Endothelial cell of umbilical vein (primary cell): ENCODE measurements at regions of chr10 and their contacts with region 1.

Region 1: GRCh38 chr10:13891128-13892000 is 304.6 kb downstream of the PRPF18 start:
- DNase-seq: peak; percentile 56
- H3K4me3 ChIP-seq: peak overlapping the region; percentile 74 to 88 (median 78)
- H3K27ac ChIP-seq: peak overlapping the region; percentile 93
- H3K4me1 ChIP-seq: peaks cover 60% of the 10 kb centered on the region
- H3K27me3 ChIP-seq: no peaks in the 10 kb centered on the region
- CTCF ChIP-seq: no peak
- POLR2A ChIP-seq: peak; percentile 24

Region 2: DNA sequence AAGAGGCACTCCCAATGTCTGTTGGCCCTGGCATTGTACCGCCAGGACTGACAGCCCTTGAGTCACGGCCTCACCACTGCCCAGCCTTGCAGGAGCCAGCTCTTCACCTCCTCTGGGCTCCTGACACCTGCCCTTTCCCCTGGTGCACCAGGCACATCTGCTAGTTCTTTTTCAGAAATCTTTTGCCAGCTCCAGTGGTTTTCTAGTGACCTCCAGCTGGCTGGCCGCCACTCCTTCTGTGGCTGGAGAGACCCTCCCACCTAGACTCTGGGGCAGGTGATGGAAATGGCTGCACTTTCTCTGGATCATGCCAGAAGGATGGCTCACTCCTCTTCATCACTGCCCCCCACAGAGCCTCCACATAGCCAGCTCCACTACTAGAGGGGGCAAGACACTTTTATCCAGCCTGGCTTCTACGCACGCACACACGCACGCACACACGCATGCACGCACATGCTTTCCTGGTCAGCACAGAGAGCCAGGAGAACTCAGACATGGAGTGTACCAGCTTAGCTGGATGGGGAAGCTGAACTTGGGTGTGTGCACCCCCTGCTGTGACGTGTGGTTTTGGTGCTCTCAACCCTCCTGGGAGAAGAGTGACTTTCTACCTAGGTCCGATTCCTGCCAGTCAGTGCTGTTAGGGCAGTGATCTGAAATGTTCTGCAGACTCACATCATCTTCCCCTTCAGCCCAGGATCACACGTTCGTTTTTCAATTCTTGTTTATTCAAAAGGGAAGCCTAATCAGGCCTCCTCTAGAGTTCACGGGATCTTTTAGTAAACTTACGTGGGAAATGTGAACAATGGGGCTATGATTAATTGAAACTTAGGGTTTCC is 82.6 kb before region 1 on chr10:
- CTCF ChIA-PET with region 1: no interaction called
- POLR2A ChIA-PET with region 1: no interaction called
- dilution Hi-C with region 1: no loop called
- intact Hi-C with region 1: loop called (anchors 5 kb)
- DNase-seq: peak; percentile 82
- H3K4me3 ChIP-seq: no peak overlapping the region
- H3K27ac ChIP-seq: peak overlapping the region; percentile 33
- H3K4me1 ChIP-seq: peaks cover 41% of the 10 kb centered on the region
- H3K27me3 ChIP-seq: no peaks in the 10 kb centered on the region
- CTCF ChIP-seq: no peak
- POLR2A ChIP-seq: peak; percentile 10

Region 3: DNA sequence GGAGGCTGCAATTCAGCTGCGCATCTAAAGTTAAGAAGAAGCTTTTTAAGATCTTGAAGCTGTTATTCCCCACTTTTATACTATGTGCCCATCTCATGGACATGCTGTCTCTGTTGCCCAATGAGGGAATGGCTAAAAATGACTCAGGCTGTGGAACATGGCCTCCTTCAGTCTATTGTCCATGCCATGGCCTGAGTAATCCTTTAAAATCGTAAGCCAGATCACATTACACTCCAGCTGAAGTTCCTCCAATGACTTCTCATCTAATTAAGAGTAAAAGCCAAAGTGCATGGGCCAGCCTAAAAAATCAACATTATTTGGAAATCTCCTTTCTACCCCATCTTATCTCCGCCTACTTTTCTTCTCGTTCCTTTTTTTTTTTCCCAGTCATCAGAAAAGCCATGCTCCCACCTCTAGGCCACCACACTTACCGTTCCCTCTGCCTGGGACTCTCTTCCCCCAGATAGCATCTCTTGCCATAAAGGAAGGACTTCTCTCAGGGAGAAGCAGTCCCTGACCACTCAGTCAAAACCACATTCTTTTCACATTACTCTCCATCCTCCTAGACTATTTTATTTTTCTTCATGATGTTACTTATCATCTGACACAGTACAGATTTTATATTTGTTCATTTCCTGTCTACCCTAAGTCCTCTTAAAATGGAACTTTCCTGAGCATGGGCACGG is 32.8 kb after region 1 on chr10:
- CTCF ChIA-PET with region 1: no interaction called
- POLR2A ChIA-PET with region 1: no interaction called
- dilution Hi-C with region 1: no loop called
- intact Hi-C with region 1: loop called (anchors 1 kb)
- DNase-seq: peak; percentile 74
- H3K4me3 ChIP-seq: no peak overlapping the region
- H3K27ac ChIP-seq: peak overlapping the region; percentile 87
- H3K4me1 ChIP-seq: peaks cover 24% of the 10 kb centered on the region
- H3K27me3 ChIP-seq: no peaks in the 10 kb centered on the region
- CTCF ChIP-seq: no peak
- POLR2A ChIP-seq: peak; percentile 45

Region 4: GRCh38 chr10:13956826-13957225 is 65.5 kb after region 1 on chr10:
- CTCF ChIA-PET with region 1: no interaction called
- POLR2A ChIA-PET with region 1: no interaction called
- dilution Hi-C with region 1: no loop called
- intact Hi-C with region 1: no loop called
- DNase-seq: no peak
- H3K4me3 ChIP-seq: no peak overlapping the region
- H3K27ac ChIP-seq: no peak overlapping the region
- H3K4me1 ChIP-seq: peaks cover 20% of the 10 kb centered on the region
- H3K27me3 ChIP-seq: no peaks in the 10 kb centered on the region
- CTCF ChIP-seq: no peak
- POLR2A ChIP-seq: no peak

Region 5: DNA sequence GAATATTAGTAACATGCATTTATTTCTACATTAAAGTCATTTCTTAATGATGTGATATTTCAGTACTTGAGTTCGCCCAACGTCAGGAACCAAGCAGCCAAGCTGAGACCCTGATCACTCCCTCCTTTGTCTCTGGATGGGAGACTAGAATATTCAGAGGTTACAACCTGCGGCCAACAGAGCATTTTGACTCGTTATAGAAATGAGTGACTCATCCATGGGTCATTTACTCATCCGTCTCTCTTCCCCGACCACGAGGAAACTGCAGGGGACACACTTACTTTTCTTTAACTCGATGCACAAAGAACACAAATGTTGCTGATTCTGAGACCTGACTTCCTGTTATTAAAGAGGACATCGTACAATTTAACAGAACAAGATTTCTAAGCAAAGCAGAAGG is 96.1 kb after region 1 on chr10:
- CTCF ChIA-PET with region 1: interaction called, 3 read pairs
- POLR2A ChIA-PET with region 1: interaction called, 5 read pairs
- dilution Hi-C with region 1: no loop called
- intact Hi-C with region 1: loop called (anchors 2 kb)
- DNase-seq: peak; percentile 73
- H3K4me3 ChIP-seq: no peak overlapping the region
- H3K27ac ChIP-seq: peak overlapping the region; percentile 71
- H3K4me1 ChIP-seq: peaks cover 76% of the 10 kb centered on the region
- H3K27me3 ChIP-seq: no peaks in the 10 kb centered on the region
- CTCF ChIP-seq: no peak
- POLR2A ChIP-seq: no peak

Region 6: GRCh38 chr10:14032395-14032998 is 141.1 kb after region 1 on chr10:
- CTCF ChIA-PET with region 1: no interaction called
- POLR2A ChIA-PET with region 1: no interaction called
- dilution Hi-C with region 1: no loop called
- intact Hi-C with region 1: loop called (anchors 5 kb)
- DNase-seq: peak; percentile 41
- H3K4me3 ChIP-seq: no peak overlapping the region
- H3K27ac ChIP-seq: no peak overlapping the region
- H3K4me1 ChIP-seq: peaks cover 14% of the 10 kb centered on the region
- H3K27me3 ChIP-seq: no peaks in the 10 kb centered on the region
- CTCF ChIP-seq: peak; percentile 89 to 93
- POLR2A ChIP-seq: no peak